Left cardiac atrium (tissue), 4 donors: ENCODE measurements at regions of chr2 and their contacts with region 1.

Region 1: DNA sequence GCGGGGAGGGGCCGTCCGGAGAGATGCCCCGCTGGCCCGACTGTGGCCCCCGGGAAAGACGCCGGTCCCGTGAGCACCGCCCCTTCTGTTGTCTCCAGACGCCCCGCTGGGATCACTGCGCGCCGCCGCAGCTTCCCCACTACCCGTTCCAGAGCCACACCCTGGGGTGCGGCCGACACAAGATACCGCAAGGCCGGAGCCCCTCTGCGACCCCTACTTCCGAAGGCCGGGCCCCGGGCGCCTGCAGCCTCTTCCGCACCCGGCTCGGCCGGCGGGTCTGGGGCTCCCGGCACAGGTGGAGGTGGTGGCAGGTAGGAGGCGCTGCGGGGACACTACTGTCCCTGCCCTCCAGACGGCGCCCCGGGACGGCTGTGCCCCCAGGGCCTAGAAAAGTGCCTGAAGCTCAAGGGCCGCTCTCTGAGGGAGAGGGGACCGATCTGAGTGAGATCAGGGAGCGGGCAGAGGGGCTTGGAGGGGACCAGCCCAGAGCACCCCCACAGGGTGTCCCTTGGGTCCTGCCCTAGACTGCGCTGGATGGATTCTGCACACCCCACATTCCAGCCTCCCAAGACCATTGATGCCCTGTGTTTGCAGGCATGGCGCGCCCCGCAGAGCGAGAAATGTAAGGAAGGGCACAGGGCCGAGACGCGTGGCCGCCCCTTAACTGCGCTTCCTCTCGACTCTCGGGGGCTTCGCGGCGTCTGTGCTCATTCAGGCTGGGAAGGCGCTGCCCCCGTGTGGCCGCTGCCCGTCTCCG is 80.0 kb downstream of the GFPT1 start:
- DNase-seq: peak; percentile 89
- ATAC-seq: peak; percentile 88 to 89

Region 2: DNA sequence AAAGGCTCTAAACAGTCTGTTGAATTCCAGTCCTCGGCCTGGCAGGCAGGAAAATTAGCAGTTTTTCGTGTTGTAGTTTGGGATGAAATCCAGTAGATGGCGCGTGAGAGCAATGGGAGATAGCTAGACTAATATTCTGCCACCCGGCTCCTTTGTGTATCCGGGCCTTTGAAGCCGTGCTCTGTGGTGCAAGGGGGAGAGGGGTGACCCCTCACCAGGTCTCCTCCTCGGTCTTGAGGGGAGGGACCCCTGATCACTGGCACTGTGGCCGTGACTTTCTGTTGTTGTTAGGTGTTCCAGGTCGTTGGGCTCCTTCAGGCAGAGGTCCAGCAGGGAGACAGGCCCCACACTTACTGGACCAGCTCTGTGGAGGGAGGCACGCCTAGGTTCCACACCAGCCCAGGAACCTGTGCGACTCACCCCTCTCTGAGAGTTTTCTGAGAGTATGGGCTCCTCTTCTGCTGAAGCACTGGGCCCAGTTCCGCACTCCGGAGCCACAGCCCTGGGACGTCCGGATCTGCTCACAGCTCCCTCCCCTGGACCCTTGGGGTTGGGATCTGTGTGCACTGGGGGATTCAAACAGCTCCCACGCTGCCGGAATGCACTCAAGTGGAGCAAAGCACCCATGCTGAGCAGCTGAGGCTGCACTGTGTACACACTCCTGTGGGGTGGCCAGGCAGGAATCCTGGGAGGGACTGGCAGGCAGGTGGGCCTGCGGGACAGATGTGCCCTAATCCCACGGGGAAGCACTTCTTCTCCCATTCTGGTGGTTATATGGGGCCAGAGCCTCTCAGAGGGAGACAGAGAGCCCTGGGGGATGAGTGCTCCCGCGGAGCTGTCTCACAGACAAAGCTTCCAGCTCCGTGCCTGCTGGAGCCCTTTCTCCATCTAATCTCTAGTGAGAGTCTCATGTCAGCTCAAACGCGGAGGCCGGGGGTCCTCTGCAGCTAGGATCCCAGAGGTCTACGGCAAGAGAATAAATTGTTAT is 363.1 kb before region 1 on chr2:
- intact Hi-C with region 1: loop called in 1 of 2 experiments (anchors 5 kb)
- DNase-seq: peak; percentile 26
- ATAC-seq: peak; percentile 80 to 86

Region 3: DNA sequence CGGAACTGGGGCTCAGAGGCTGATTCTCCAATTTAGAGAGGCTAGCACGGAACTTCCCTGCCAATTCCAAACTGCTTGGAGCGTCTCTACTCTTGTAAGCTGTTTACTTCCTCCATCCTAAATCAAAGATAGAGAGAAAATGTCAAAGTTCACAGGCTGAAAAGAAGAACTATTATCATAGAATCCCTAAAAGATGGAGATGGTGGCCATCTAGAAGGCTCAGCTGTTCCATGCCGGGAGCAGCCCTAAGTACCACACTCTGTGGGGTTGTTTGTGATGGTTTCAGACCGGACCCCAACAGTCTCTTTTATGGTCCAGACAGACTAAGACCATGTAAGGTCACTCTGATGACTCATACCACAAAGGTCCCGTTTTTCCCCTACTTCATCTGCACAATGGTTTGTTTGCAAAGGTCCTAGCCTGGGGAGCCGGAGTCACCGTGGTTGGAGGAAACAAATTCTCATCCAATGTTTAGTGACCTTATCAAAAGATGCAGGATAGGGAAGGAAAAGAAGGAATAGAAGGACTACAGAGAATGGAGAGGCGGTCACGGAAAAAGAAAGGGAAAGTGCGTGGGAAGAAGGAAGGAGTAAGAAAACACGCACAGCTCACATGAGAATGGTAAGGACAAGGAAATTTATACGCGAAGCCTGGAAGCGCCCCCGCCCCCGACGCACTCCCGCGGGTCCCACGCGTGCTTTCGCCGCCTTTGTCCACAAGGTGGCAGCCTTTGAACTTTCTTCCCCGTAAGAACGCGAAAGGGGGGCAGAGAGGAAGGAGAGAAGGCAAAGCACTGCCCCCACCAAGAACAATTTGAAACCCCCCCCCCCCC is 294.5 kb before region 1 on chr2:
- intact Hi-C with region 1: loop called (anchors 2 to 5 kb)
- DNase-seq: peak; percentile 72
- ATAC-seq: peak; percentile 63 to 72

Region 4: DNA sequence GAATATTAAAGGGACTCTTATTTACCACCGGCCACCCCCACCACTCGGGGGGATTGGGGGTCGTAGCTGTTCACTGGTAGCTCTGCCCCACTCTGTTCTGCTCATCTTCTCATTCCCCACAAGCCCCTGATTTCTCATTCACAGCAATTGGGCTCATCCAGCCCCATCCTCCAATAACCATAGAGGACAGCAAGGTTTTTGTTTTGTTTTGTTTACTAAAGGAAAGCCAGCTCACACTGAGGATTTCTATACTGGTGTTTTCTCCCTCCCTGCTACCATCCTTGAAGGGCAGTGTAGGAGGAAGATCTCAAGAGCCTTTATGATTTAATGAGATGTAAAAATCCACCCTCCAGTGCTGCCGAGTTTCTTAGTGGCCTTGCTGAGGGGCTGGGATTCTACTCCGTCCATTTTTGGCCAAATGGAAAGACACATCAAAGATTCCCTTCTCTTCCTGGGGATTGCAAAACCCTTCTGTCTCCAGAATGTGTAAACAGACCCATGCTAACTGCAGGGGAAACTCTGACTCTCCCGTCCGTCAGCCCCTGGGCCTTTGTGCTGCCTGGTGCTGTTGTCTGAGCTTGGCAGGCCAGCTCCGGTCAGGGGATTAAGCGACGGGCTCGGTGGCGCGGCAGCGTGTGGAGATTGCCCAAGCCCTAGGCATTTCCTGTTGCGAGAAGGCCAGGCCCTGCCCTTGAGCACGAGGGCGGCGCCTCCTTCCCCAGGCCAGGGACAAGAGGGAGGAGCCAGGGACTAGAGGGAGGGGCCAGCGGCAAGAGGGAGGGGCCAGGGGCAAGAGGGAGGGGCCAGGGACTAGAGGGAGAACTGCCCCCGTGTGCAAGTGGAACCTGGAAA is 129.0 kb before region 1 on chr2:
- intact Hi-C with region 1: loop called in 1 of 2 experiments (anchors 5 kb)
- DNase-seq: peak; percentile 94
- ATAC-seq: peak; percentile 92 to 93